Stomach (tissue), 19 donors: ENCODE measurements at regions of chr4 and their contacts with region 1.

Region 1: GRCh38 chr4:54027311-54027710 is 37.1 kb downstream of the CHIC2 start:
- DNase-seq: no peak
- H3K4me3 ChIP-seq: no peak overlapping the region
- H3K27ac ChIP-seq: no peak overlapping the region
- H3K4me1 ChIP-seq: peaks cover 0 to 14% (median 3%) of the 10 kb centered on the region in 4 donors
- H3K27me3 ChIP-seq: no peaks in the 10 kb centered on the region
- CTCF ChIP-seq: no peak
- EP300 ChIP-seq: no peak
- POLR2A ChIP-seq: no peak

Region 2: GRCh38 chr4:53840643-53841042 is 186.7 kb before region 1 on chr4:
- intact Hi-C with region 1: loop called (anchors 10 kb)
- DNase-seq: no peak
- H3K4me3 ChIP-seq: no peak overlapping the region
- H3K27ac ChIP-seq: no peak overlapping the region
- H3K4me1 ChIP-seq: no peaks in the 10 kb centered on the region
- H3K27me3 ChIP-seq: no peaks in the 10 kb centered on the region
- CTCF ChIP-seq: no peak
- EP300 ChIP-seq: no peak
- POLR2A ChIP-seq: no peak